Body of pancreas (tissue), 4 donors: ENCODE measurements at regions of chr9 and their contacts with region 1.

Region 1: DNA sequence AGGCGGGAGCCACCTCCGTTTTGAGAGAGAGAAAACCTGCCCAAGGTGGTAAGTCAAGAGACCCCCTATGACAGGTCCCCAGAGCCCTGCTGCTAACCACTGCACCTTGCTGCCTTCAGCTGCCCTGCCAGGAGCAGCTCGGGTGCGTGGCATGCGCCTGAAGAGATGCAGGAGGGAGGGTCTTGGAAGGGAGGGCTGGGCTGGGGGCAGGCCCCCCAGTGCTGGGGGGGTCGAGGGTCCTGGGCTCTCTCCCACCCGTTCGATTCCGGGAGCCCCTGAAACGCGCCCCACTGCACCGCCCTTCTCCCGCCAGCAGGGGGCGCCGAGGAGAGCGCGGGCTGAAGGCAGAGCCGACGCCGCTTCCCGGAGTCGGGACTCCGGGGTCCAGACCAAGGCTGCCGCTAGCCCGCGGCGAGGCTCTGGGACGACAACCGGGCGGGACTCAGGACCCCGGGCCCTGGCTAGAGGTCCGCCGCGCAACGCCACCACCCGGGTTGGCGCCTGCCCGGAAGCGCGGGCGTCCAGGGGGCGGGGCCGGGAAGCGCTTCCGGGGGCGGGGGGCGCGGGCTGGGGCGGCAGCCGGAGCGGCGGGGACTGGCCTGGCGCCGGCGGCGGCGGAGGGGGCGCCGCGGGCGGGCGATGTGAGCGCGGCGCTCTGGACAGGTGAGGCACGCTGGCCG is at the start of gene ZBTB34:
- DNase-seq: peak; percentile 54 to 70 (median 66)
- ATAC-seq: peak; percentile 82
- H3K4me3 ChIP-seq: peak within 1 kb of the TSS; percentile 83 to 93
- H3K27ac ChIP-seq: peak within 1 kb of the TSS; percentile 82 to 96 (median 91)
- H3K4me1 ChIP-seq: peaks cover 44% of the 10 kb centered on the region
- H3K27me3 ChIP-seq: no peaks in the 10 kb centered on the region
- CTCF ChIP-seq: peak; percentile 91 to 100 (median 98)
- POLR2A ChIP-seq: peak in 2 of 3 donors; percentile 53 to 61
- total RNA-seq, gene ZBTB34: 5.3 to 7.5 TPM

Region 2: GRCh38 chr9:126893079-126893478 is 32.9 kb after region 1 on chr9:
- intact Hi-C with region 1: no loop called
- DNase-seq: no peak
- ATAC-seq: no peak
- H3K4me3 ChIP-seq: no peak overlapping the region
- H3K27ac ChIP-seq: no peak overlapping the region
- H3K4me1 ChIP-seq: no peaks in the 10 kb centered on the region
- H3K27me3 ChIP-seq: no peaks in the 10 kb centered on the region
- CTCF ChIP-seq: peak in 6 of 7 experiments; percentile 14 to 49 (median 39)
- POLR2A ChIP-seq: no peak

Region 3: GRCh38 chr9:126914458-126915280 is 54.5 kb after region 1 on chr9 and contains the start of gene RALGPS1:
- intact Hi-C with region 1: loop called (anchors 10 kb)
- DNase-seq: peak; percentile 95 to 97 (median 96)
- ATAC-seq: peak; percentile 95
- H3K4me3 ChIP-seq: peak within 1 kb of the TSS; percentile 23 to 45
- H3K27ac ChIP-seq: peak within 1 kb of the TSS; percentile 70 to 93 (median 88)
- H3K4me1 ChIP-seq: peaks cover 18% of the 10 kb centered on the region
- H3K27me3 ChIP-seq: no peaks in the 10 kb centered on the region
- CTCF ChIP-seq: peak in 2 of 7 experiments; percentile 8
- POLR2A ChIP-seq: peak in 2 of 3 donors; percentile 37 to 38
- total RNA-seq, gene RALGPS1: 15.3 to 79.4 TPM